IMR-90 (cell line): ENCODE measurements at regions of chr9 and their contacts with region 1.

Region 1: GRCh38 chr9:2711716-2712115 is 5.6 kb upstream of the KCNV2 start:
- DNase-seq: no peak
- ATAC-seq: no peak
- H3K4me3 ChIP-seq: no peak overlapping the region
- H3K27ac ChIP-seq: no peak overlapping the region
- H3K4me1 ChIP-seq: no peaks in the 10 kb centered on the region
- H3K27me3 ChIP-seq: no peaks in the 10 kb centered on the region
- CTCF ChIP-seq: no peak
- POLR2A ChIP-seq: no peak
- RAD21 ChIP-seq: no peak

Region 2: GRCh38 chr9:1995084-1995483 is 716.6 kb before region 1 on chr9:
- CTCF ChIA-PET with region 1: no interaction called
- POLR2A ChIA-PET with region 1: no interaction called
- dilution Hi-C with region 1: no loop called
- in situ Hi-C with region 1: no loop called
- intact Hi-C with region 1: no loop called
- DNase-seq: no peak
- ATAC-seq: no peak
- H3K4me3 ChIP-seq: no peak overlapping the region
- H3K27ac ChIP-seq: no peak overlapping the region
- H3K4me1 ChIP-seq: no peaks in the 10 kb centered on the region
- H3K27me3 ChIP-seq: peaks cover 5% of the 10 kb centered on the region
- CTCF ChIP-seq: no peak
- POLR2A ChIP-seq: no peak
- RAD21 ChIP-seq: no peak

Region 3: DNA sequence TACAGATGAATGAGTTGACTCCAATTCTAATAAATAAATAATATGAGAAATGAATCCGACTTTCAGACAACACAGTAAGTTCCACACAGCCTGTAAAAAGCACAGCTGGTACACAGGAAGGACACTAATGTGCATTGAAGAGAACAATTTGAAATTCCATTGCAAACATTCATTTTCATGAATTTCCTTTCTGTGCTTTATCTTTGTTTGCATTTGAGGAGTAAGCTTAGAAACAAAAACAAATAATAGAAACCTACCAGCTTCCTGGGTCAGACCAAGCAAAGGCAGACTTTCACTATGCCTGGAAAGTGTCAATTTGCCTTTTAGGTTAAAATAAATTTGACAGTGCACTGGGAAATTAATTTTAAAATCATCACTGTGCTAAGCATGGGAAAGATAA is 234.0 kb before region 1 on chr9:
- CTCF ChIA-PET with region 1: no interaction called
- POLR2A ChIA-PET with region 1: interaction called, 10 read pairs
- dilution Hi-C with region 1: no loop called
- in situ Hi-C with region 1: no loop called
- intact Hi-C with region 1: no loop called
- DNase-seq: peak; percentile 43
- ATAC-seq: peak; percentile 84
- H3K4me3 ChIP-seq: no peak overlapping the region
- H3K27ac ChIP-seq: no peak overlapping the region
- H3K4me1 ChIP-seq: no peaks in the 10 kb centered on the region
- H3K27me3 ChIP-seq: no peaks in the 10 kb centered on the region
- CTCF ChIP-seq: no peak
- POLR2A ChIP-seq: no peak
- RAD21 ChIP-seq: no peak